Uterus (tissue), 4 donors: ENCODE measurements at regions of chr1 and their contacts with region 1.

Region 1: DNA sequence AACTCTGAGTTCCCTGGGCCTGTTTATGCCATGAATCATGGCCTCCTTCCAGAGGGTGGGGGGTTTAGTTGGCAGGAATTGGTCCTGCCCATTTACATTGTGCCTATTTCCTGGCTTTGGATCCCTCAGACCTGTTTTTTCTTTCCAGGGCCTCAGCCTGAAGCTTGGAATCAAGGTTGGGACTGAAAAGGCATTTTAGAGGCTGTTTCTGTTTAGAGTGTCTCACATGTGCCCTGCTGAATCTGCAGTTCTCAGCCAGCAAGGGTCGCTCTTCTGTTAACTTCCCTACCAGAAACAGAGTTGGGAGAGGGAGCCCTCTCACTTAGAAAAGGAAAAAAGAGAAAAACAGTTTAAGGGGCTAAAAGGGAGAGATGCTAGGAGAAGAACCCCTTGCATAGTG is 191.1 kb downstream of the PTPRC start:
- DNase-seq: no peak
- H3K4me3 ChIP-seq: no peak overlapping the region
- H3K27ac ChIP-seq: no peak overlapping the region
- H3K4me1 ChIP-seq: no peaks in the 10 kb centered on the region
- H3K27me3 ChIP-seq: no peaks in the 10 kb centered on the region
- CTCF ChIP-seq: no peak
- POLR2A ChIP-seq: no peak

Region 2: GRCh38 chr1:198693321-198693720 is 136.6 kb before region 1 on chr1:
- intact Hi-C with region 1: loop called (anchors 5 kb)
- DNase-seq: no peak
- H3K4me3 ChIP-seq: no peak overlapping the region
- H3K27ac ChIP-seq: no peak overlapping the region
- H3K4me1 ChIP-seq: no peaks in the 10 kb centered on the region
- H3K27me3 ChIP-seq: no peaks in the 10 kb centered on the region
- CTCF ChIP-seq: no peak
- POLR2A ChIP-seq: no peak